Naive thymus-derived CD4-positive, alpha-beta T cell (primary cell): ENCODE measurements at regions of chr10 and their contacts with region 1.

Region 1: DNA sequence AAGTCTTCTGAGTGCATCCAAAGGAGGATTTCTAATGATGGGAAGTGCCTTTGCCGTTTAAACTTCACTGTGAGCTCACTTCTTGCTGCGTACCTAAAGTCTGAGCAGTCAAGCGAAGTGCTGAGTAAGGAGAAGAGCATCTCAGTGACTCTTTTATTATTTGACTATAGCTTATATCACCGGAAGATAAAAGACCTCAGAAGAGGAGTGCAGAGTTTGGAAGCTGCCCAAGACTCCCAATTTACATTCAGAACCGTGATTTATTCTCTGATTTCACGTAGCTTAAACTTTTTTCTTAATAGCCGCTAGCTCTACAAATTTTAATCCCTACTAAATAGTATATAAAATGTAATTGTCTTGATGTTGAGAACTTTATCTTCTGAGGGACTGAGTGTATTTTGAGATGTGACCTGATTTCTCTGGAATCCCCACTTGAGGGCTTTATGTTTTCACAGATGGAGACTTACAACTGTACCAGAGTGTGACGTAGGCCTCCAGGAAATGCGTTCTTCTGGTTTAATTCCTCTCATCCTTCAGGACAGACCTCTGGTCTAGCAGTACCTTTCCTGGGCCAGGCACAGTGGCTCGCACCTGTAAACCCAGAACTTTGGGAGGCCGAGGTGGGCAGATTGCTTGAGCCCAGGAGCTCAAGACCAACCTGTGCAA is 51.1 kb downstream of the CAMK1D start:
- DNase-seq: peak in 1 of 9 donors; percentile 1
- ATAC-seq: no peak
- H3K4me3 ChIP-seq: no peak overlapping the region
- H3K4me3 Mint-ChIP-seq: no peak overlapping the region
- H3K27ac ChIP-seq: no peak overlapping the region
- H3K27ac Mint-ChIP-seq: no peak overlapping the region
- H3K4me1 ChIP-seq: no peaks in the 10 kb centered on the region
- H3K4me1 Mint-ChIP-seq: peaks cover 11 to 33% (median 17%) of the 10 kb centered on the region in 7 donors
- H3K27me3 ChIP-seq: no peaks in the 10 kb centered on the region
- H3K27me3 Mint-ChIP-seq: no peaks in the 10 kb centered on the region

Region 2: GRCh38 chr10:11793762-11794479 is 606.5 kb before region 1 on chr10:
- CTCF ChIA-PET with region 1: no interaction called
- POLR2A ChIA-PET with region 1: no interaction called
- intact Hi-C with region 1: no loop called
- DNase-seq: no peak
- ATAC-seq: no peak
- H3K4me3 ChIP-seq: no peak overlapping the region
- H3K4me3 Mint-ChIP-seq: no peak overlapping the region
- H3K27ac ChIP-seq: no peak overlapping the region
- H3K27ac Mint-ChIP-seq: no peak overlapping the region
- H3K4me1 ChIP-seq: no peaks in the 10 kb centered on the region
- H3K4me1 Mint-ChIP-seq: peaks cover 0 to 4% (median 3%) of the 10 kb centered on the region in 7 donors
- H3K27me3 ChIP-seq: no peaks in the 10 kb centered on the region
- H3K27me3 Mint-ChIP-seq: peaks cover 0 to 4% (median 0%) of the 10 kb centered on the region in 5 donors

Region 3: DNA sequence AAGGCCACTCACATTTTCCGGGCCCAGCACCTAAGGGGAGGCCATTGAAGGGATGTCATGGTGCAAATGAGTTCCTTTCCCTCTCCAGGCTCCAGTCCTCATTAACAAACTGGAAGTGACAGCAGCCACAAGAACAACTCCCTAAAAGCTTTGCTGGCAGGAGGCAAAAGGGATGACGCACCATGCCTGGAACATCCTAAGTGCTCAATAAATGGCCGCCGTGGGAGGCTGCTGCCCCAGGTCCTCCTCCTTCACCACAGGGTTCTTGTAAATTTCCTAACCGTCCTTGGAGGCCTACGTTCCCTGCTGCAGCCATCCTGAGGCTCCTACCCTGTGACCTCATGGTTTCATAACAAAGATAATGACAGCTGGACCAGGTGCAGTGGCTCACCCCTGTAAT is 92.3 kb before region 1 on chr10:
- CTCF ChIA-PET with region 1: no interaction called
- POLR2A ChIA-PET with region 1: no interaction called
- intact Hi-C with region 1: no loop called
- DNase-seq: no peak
- ATAC-seq: no peak
- H3K4me3 ChIP-seq: no peak overlapping the region
- H3K4me3 Mint-ChIP-seq: no peak overlapping the region
- H3K27ac ChIP-seq: no peak overlapping the region
- H3K27ac Mint-ChIP-seq: no peak overlapping the region
- H3K4me1 ChIP-seq: no peaks in the 10 kb centered on the region
- H3K4me1 Mint-ChIP-seq: peaks cover 0 to 4% (median 0%) of the 10 kb centered on the region in 7 donors
- H3K27me3 ChIP-seq: no peaks in the 10 kb centered on the region
- H3K27me3 Mint-ChIP-seq: no peaks in the 10 kb centered on the region

Region 4: DNA sequence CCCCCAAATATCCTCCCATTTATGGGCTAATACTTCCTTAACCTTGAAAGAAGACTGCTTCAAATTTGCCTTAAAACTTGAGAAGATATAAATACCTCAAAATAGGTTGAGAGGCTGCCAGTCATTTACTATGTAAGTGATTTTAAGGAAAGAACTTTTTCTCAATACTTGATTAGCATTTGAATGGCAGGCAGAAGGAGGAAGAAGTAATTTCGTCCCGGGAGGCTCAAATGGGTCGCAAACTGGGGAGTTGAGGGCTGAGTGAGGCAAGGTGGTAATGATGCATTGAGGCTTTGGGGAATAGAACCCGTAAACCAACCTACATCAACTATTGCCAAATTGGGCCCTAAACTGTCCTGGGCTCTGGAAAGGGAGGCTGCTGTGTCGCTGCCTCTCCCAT is 39.9 kb before region 1 on chr10:
- CTCF ChIA-PET with region 1: no interaction called
- POLR2A ChIA-PET with region 1: no interaction called
- intact Hi-C with region 1: no loop called
- DNase-seq: no peak
- ATAC-seq: no peak
- H3K4me3 ChIP-seq: no peak overlapping the region
- H3K4me3 Mint-ChIP-seq: no peak overlapping the region
- H3K27ac ChIP-seq: no peak overlapping the region
- H3K27ac Mint-ChIP-seq: peak overlapping the region in 3 of 9 donors; percentile 28 to 68 (median 65)
- H3K4me1 ChIP-seq: peaks cover 7% of the 10 kb centered on the region in 2 donors
- H3K4me1 Mint-ChIP-seq: peaks cover 19 to 80% (median 63%) of the 10 kb centered on the region in 7 donors
- H3K27me3 ChIP-seq: no peaks in the 10 kb centered on the region
- H3K27me3 Mint-ChIP-seq: peaks cover 0 to 12% (median 0%) of the 10 kb centered on the region in 5 donors

Region 5: DNA sequence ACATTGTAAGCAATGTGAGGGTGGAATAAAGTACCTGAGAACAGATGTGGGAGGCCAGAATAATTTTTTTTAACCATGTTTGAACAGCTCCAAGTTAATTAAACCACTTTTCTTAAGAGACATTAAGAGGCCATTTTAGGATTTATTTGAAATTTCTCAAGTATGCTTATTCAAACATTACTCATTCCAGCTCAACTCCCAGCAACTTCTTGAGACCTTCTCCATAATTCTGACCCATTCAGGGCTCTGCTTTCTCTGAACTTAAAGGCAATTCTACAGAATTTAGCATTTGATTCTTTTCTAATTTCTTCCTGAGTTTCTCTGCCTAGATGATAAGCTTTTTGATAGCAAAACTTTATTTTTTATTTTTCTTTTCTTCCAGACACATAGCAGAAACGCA is 263.5 kb after region 1 on chr10:
- CTCF ChIA-PET with region 1: interaction called, 10 read pairs
- POLR2A ChIA-PET with region 1: no interaction called
- intact Hi-C with region 1: no loop called
- DNase-seq: no peak
- ATAC-seq: no peak
- H3K4me3 ChIP-seq: no peak overlapping the region
- H3K4me3 Mint-ChIP-seq: no peak overlapping the region
- H3K27ac ChIP-seq: no peak overlapping the region
- H3K27ac Mint-ChIP-seq: no peak overlapping the region
- H3K4me1 ChIP-seq: no peaks in the 10 kb centered on the region
- H3K4me1 Mint-ChIP-seq: peaks cover 0 to 5% (median 0%) of the 10 kb centered on the region in 7 donors
- H3K27me3 ChIP-seq: no peaks in the 10 kb centered on the region
- H3K27me3 Mint-ChIP-seq: no peaks in the 10 kb centered on the region

Region 6: DNA sequence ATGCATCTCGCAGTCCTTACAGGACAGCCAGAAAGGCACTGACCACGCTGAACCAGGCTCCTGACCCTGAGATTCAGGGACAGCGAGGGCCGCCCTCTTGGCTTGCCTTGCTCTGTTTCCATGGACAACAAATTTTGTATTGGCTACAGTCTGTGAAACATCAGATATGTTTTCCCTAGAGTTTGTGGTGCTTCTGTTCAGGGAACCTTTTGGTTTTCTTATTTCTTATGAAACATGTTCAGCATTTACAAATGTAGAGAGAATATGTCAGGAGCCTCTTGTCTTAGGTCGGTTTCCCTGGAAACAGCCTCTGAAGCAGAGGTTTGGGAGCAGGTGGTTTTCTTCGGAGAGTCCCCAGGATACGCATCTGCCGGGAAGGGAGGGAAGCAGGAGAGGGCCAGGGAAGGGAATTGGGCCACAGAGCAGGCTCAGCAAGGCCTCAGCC is 341.0 kb after region 1 on chr10:
- CTCF ChIA-PET with region 1: no interaction called
- POLR2A ChIA-PET with region 1: no interaction called
- intact Hi-C with region 1: no loop called
- DNase-seq: no peak
- ATAC-seq: no peak
- H3K4me3 ChIP-seq: no peak overlapping the region
- H3K4me3 Mint-ChIP-seq: no peak overlapping the region
- H3K27ac ChIP-seq: no peak overlapping the region
- H3K27ac Mint-ChIP-seq: no peak overlapping the region
- H3K4me1 ChIP-seq: no peaks in the 10 kb centered on the region
- H3K4me1 Mint-ChIP-seq: peaks cover 0 to 21% (median under 1%) of the 10 kb centered on the region in 7 donors
- H3K27me3 ChIP-seq: no peaks in the 10 kb centered on the region
- H3K27me3 Mint-ChIP-seq: no peaks in the 10 kb centered on the region